Heart left ventricle (tissue), 16 donors: ENCODE measurements at regions of chr2 and their contacts with region 1.

Region 1: GRCh38 chr2:22513563-22513962 is 871.4 kb upstream of the KLHL29 start:
- DNase-seq: no peak
- ATAC-seq: no peak
- H3K4me3 ChIP-seq: no peak overlapping the region
- H3K27ac ChIP-seq: no peak overlapping the region
- H3K4me1 ChIP-seq: no peaks in the 10 kb centered on the region
- H3K27me3 ChIP-seq: no peaks in the 10 kb centered on the region
- CTCF ChIP-seq: no peak
- POLR2A ChIP-seq: no peak

Region 2: DNA sequence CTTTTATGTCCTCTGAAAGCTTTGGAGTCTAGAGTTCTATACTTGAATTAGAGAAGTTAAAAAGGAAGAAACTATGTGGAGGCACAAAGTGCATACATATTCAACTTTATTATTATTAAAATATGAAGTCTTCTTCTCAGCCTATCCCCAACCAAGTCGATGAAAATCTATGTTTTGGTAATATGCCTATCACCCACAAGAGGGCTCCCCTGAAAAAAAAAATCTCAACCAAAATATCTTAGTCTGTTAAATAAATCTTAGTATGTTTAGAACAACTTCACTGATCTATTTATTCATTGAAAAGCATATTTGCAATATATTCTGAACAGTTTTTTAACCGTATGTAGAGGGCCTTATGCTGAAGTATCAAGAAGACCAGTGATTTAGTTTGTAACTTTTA is 585.3 kb before region 1 on chr2:
- intact Hi-C with region 1: no loop called
- DNase-seq: no peak
- ATAC-seq: no peak
- H3K4me3 ChIP-seq: no peak overlapping the region
- H3K27ac ChIP-seq: no peak overlapping the region
- H3K4me1 ChIP-seq: peaks cover 0 to 10% (median 0%) of the 10 kb centered on the region in 12 donors
- H3K27me3 ChIP-seq: no peaks in the 10 kb centered on the region
- CTCF ChIP-seq: peak in 7 of 12 donors; percentile 9 to 34 (median 29)
- POLR2A ChIP-seq: no peak

Region 3: DNA sequence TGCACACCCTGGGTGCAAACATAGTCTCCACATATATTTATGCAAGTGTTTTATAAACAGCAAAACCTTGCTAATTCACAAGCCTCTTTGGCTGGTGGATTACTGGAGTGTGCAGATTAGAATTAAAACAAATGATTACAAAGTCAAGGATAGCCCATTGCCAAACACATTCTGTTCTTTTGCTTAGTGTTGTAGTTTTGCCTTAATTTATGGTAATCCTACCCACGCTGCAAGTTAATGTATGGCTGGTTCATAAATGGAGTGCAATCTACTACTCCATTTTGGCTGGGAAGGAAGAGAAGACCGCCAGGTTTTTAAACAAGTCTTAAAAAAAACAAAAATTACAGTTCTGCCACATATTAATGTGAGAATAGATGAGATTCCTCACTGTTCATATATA is 11.7 kb before region 1 on chr2:
- intact Hi-C with region 1: loop called in 1 of 10 experiments (anchors 1 kb)
- DNase-seq: no peak
- ATAC-seq: no peak
- H3K4me3 ChIP-seq: no peak overlapping the region
- H3K27ac ChIP-seq: no peak overlapping the region
- H3K4me1 ChIP-seq: peaks cover 0 to 18% (median 0%) of the 10 kb centered on the region in 12 donors
- H3K27me3 ChIP-seq: no peaks in the 10 kb centered on the region
- CTCF ChIP-seq: no peak
- POLR2A ChIP-seq: no peak

Region 4: DNA sequence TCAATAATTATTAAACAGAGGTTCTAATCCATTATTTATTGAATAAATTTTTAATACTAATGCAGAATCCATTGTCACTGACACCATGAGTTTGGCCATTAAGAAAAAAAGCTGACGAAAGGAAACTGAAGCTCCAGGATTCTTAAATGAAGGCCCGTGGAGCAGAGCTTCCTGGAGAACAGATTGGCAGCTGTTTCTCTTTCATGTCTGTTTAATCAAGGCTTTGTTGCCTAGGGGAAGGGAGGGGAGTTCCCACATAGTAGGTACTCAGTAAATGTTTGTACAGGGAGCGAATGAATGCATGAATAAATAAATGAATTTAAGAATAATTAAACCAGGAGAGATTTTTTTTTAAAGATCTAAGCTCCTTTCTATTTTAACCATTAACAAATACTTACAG is 556.4 kb after region 1 on chr2:
- intact Hi-C with region 1: no loop called
- DNase-seq: no peak
- ATAC-seq: no peak
- H3K4me3 ChIP-seq: no peak overlapping the region
- H3K27ac ChIP-seq: no peak overlapping the region
- H3K4me1 ChIP-seq: no peaks in the 10 kb centered on the region
- H3K27me3 ChIP-seq: peaks cover 0 to under 1% (median 0%) of the 10 kb centered on the region in 9 donors
- CTCF ChIP-seq: no peak
- POLR2A ChIP-seq: no peak